HEK293T (cell line): ENCODE measurements at regions of chr12 and their contacts with region 1.

Region 1: GRCh38 chr12:47715393-47715876 is 9.6 kb upstream of the RPAP3 start:
- DNase-seq: peak; percentile 71

Region 2: GRCh38 chr12:47657565-47657964 is 57.9 kb before region 1 on chr12:
- CTCF ChIA-PET with region 1: no interaction called
- POLR2A ChIA-PET with region 1: no interaction called
- DNase-seq: no peak

Region 3: DNA sequence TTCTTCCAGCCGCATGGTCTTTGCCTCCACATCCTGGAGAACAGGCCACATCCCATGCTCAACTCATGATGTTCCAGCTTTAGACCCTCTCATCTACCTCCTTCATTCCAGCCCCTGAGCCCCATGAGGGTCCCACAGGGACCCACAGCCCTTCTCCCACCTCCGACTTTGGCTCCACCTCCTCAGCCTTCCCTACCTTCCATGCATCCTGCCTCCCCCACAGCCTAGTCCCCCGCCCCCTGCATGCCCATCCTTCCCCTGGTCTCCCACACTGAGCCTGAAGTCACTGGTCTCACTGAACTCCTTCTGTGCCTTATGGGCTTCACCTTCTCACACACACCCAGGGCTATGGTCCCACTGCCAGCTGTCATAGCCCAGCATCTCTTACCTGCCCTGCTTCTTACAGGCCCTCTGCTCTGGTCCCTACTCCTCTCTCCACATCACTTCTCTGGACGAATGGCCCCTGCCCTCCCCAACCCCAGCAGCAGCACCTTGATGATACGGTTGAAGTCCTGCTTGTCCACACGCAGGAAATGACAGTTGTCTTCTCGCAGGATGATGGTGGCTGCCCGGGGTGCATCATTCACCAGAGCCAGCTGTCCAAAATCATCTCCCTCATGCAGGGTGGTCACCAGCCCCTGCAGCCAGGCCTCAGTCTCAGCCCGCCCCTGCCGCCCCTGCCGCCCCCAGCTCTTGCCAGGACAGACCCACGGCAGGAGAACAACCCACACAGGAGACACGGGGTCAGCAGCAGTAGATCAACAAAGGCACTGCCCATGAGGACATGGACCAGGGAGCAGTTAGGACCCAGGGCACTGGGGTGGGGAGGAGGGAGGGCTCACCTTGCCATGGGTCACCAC is 33.7 kb after region 1 on chr12:
- CTCF ChIA-PET with region 1: no interaction called
- POLR2A ChIA-PET with region 1: no interaction called
- DNase-seq: no peak

Region 4: DNA sequence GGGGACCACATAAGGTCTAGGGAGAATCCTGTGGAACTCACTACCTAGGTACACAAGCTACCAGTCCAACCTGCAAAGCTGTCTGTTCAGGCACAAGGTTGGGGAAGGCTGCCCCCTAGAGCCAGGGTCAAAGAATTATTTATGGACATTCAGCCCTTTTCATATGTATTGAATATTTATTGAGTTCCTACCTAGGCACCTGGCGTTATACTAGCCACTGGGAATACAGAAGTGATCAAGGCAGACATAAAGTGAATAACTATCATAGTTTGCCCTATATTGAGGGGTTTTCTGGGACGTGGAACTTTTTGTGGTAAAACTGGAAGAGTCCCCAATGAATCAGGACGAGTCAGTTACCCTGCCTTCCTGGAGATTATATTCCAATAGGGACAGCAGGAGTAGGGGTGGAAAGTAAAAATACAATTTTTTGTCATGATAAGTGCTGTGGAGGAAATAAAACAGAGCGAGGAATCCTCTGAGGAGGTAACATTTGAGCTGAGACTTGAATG is 51.8 kb after region 1 on chr12:
- CTCF ChIA-PET with region 1: interaction called, 30 read pairs
- POLR2A ChIA-PET with region 1: interaction called, 4 read pairs
- DNase-seq: peak; percentile 56

Region 5: DNA sequence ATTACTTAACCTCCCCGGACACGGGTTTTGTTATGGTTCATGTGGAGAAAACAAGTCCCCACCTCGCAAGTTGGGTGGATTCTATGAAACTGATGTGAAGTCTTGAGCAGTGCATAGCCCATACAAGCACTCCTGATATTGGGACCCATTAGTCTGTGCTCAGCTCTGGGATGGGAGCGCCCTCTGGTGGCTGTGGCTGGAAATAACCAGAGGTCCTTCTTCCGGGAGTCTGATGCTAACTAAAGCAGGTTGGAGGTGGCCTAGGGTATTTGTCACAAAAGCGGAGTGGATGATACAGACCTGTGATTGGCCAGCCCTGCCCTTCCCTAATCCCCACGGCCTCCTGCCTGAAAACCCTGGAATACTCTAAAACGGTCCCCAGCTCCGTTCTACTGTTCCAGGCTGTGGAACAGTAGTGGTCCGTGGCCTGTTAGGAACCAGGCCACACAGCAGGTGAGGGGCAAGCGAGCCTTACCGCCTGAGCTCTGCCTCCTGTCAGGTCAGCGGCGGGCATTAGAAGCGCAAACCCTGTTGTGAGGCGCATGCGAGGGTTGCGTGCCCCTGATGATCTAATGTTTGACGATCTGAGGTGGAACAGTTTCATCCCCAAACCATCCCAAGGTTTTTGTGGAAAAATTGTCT is 64.0 kb after region 1 on chr12:
- CTCF ChIA-PET with region 1: interaction called, 15 read pairs
- POLR2A ChIA-PET with region 1: no interaction called
- DNase-seq: peak; percentile 86